Right cardiac atrium (tissue), 5 donors: ENCODE measurements at regions of chr1 and their contacts with region 1.

Region 1: DNA sequence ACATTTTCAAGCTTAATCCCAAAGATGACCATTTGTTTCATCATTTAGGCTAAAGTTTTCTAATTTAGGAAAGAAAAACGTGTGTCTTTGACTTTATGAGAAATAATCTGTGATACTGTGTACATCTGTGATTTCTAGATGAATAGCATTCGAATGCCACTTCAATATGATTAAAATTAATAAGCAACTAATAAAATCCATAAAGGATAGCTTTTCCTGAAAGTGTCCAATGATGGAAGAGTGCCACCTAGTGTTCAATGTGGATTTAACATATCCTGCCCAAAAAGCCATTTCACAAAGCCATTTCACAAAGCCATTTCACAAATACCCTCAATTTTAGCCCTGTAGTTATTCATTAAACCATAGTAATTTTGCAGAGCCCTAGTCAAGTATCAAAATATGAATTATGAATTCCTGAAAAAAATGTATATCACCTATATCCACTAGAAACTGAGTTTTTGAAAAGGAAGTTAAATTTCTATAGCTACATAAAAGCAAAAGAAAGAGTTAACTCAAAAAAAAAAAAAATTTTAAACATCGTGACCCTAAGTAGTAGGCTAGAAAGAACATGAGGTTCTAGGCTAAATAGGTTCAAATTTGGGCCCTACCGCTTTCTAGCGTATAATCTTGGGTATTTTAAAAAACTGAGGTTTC is 19.1 kb downstream of the NME7 start:
- DNase-seq: no peak
- ATAC-seq: no peak
- H3K4me3 ChIP-seq: no peak overlapping the region
- H3K27ac ChIP-seq: no peak overlapping the region
- H3K4me1 ChIP-seq: no peaks in the 10 kb centered on the region
- H3K27me3 ChIP-seq: no peaks in the 10 kb centered on the region

Region 2: DNA sequence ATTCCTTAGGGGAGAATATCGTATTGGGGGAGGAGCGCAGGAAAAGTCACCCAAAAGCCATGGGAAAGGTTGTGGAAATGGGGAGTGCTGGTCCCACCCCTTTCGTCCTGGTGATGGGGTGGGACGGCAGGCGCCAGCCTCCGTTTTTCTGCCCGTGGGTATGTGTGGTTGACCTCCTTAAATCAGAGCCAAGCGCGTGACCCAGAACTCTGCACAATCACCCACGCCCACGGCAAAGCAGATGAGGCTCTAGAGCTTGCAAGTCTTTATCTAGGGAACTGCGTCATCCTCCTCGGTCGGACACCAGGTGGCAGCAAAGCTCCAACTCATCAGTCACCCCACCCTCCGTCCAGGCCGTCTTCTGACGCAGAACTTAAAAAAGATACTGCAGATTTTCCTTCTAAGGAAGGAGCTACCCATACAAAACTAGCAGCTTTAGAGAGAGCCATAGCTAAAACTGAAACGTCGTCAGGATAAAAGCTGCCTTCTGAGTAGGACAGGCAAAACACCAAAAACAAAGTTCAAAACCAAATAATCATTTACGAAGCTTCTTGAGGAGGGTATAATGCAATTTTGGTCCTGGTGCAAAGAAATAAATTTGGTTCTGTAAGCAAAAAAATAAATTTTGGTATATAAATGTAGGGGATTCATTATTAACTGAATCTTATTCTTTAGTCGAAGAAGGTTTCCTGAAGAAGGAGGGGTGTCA is 1005.8 kb before region 1 on chr1:
- intact Hi-C with region 1: loop called in 3 of 4 experiments (anchors 5 to 10 kb)
- DNase-seq: peak; percentile 88 to 95 (median 94)
- ATAC-seq: peak; percentile 97 to 99
- H3K4me3 ChIP-seq: no peak overlapping the region
- H3K27ac ChIP-seq: no peak overlapping the region
- H3K4me1 ChIP-seq: peaks cover 3% of the 10 kb centered on the region
- H3K27me3 ChIP-seq: no peaks in the 10 kb centered on the region

Region 3: GRCh38 chr1:168439456-168440375 is 908.8 kb before region 1 on chr1:
- intact Hi-C with region 1: loop called in 1 of 4 experiments (anchors 10 kb)
- DNase-seq: peak; percentile 61 to 85 (median 67)
- ATAC-seq: peak; percentile 82 to 85
- H3K4me3 ChIP-seq: peak overlapping the region; percentile 6
- H3K27ac ChIP-seq: no peak overlapping the region
- H3K4me1 ChIP-seq: no peaks in the 10 kb centered on the region
- H3K27me3 ChIP-seq: no peaks in the 10 kb centered on the region

Region 4: DNA sequence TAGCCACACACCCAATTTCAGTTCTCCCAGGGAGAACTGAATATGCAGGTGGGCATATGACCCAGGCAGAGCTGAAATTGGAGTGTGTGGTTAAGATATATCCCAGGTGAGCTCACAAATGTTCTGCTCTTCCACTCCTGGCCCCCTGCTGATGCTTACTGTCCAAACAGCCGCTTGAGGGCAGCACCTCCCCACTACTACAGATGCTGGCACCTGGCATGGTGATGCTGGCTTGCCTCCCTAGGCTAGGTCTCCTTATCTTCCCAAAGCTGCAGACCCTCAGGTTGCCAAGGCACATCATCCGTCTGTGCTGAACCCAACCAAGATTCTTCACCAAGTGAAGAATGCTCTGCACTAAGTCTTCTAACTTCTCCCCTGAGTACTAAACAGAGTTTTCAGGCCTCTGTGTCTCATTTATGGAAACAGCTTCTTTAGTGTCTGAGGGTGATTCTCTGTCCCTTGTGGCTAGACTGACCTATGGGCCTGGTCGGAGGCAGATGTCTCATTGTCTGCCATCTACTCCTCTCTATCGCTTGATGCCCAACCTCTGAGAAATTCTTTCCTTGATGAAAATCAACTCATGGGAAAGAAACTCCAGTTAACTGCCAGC is 744.9 kb before region 1 on chr1:
- intact Hi-C with region 1: loop called (anchors 2 to 5 kb)
- DNase-seq: peak; percentile 80 to 91 (median 88)
- ATAC-seq: peak; percentile 90 to 94
- H3K4me3 ChIP-seq: no peak overlapping the region
- H3K27ac ChIP-seq: no peak overlapping the region
- H3K4me1 ChIP-seq: no peaks in the 10 kb centered on the region
- H3K27me3 ChIP-seq: no peaks in the 10 kb centered on the region